OCI-LY7 (cell line): ENCODE measurements at regions of chr3 and their contacts with region 1.

Region 1: DNA sequence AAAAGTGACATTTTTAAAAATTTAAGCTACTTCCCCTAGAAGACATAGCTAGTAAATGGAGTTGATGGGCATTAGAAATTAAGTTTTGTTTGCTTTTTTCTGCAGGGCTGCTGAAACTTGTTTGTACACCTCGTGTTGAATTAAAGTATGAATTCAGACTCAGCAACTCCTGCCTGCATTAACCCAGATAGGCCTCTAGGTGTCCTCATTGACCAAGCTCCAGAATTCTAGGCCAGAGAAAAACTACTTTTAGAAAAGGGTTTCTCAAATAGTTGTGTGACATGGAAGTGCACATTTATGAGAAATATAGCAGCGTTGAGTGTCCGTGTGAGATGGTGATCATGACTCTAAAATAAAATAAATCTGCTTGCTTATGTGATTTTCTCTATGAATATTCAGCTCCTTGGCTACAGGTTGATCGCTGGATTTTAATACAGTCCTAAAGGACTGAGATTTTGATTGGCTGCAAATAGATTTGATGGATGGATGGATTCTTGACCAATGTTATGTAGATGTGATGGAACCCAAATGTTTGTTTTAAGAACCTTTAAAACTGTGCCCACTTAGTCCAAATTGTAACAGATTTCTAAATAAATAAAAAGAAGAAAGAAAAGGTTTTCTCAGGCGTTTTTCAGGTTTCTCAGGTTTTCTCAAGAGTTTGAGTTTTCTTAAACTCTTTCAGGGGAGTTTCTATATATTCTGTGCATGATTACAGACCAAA is 39.4 kb upstream of the LMOD3 start:
- DNase-seq: peak; percentile 54
- H3K4me3 ChIP-seq: no peak overlapping the region
- H3K27ac ChIP-seq: no peak overlapping the region
- H3K4me1 ChIP-seq: no peaks in the 10 kb centered on the region
- CTCF ChIP-seq: peak; percentile 98

Region 2: GRCh38 chr3:69306239-69307185 is 144.8 kb after region 1 on chr3:
- CTCF ChIA-PET with region 1: interaction called, 5 read pairs
- POLR2A ChIA-PET with region 1: interaction called, 3 read pairs
- intact Hi-C with region 1: loop called (anchors 1 kb)
- DNase-seq: peak; percentile 66
- H3K4me3 ChIP-seq: no peak overlapping the region
- H3K27ac ChIP-seq: no peak overlapping the region
- H3K4me1 ChIP-seq: no peaks in the 10 kb centered on the region
- CTCF ChIP-seq: peak; percentile 90

Region 3: GRCh38 chr3:69410250-69410649 is 248.5 kb after region 1 on chr3:
- CTCF ChIA-PET with region 1: no interaction called
- POLR2A ChIA-PET with region 1: no interaction called
- intact Hi-C with region 1: loop called (anchors 5 kb)
- DNase-seq: peak; percentile 63
- H3K4me3 ChIP-seq: no peak overlapping the region
- H3K27ac ChIP-seq: no peak overlapping the region
- H3K4me1 ChIP-seq: no peaks in the 10 kb centered on the region
- CTCF ChIP-seq: peak; percentile 81

Region 4: GRCh38 chr3:69425261-69425660 is 263.5 kb after region 1 on chr3:
- CTCF ChIA-PET with region 1: no interaction called
- POLR2A ChIA-PET with region 1: no interaction called
- intact Hi-C with region 1: loop called (anchors 5 kb)
- DNase-seq: peak; percentile 45
- H3K4me3 ChIP-seq: no peak overlapping the region
- H3K27ac ChIP-seq: no peak overlapping the region
- H3K4me1 ChIP-seq: no peaks in the 10 kb centered on the region
- CTCF ChIP-seq: peak; percentile 69

Region 5: DNA sequence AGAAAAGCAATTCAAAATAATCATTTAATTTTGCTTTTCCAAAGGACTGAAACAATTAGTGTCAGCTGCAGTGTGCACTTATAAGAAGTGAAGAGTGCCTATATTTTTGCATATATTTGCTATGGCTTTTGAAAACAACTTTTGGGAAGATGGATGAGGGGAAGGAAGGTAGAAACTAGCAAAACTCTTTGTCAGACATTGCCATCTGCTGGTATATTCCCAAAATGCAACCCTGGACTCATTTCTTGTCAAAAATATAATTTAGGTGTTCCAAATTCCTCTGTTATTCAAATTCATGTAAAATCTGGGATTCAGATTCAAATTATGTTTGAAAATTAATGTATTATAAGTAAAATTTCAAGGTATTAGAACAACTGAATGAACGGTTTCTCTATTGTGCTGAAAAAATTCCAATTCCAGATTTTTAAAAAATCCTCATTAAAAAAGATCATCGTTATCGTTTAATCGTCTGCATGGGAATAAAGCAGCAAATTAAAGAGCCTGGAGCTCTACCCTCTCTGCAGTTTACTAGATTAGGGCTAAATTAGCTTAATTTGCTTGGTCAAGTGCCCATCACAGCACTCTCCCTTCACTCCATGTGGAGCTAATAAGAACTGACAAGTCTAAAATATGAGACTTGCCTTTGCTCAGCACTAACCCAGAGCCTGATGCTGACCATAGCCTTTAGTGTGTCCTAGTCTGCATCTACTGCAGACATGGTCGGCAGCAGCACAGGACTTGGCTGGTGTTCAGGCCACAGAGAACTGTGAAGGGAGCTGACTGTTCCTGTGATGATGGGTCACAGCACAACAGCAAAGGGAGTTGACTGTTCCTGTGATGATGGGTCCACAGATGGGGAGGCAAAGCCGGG is 509.6 kb after region 1 on chr3:
- CTCF ChIA-PET with region 1: no interaction called
- POLR2A ChIA-PET with region 1: interaction called, 3 read pairs
- intact Hi-C with region 1: loop called (anchors 1 kb)
- DNase-seq: peak; percentile 27
- H3K4me3 ChIP-seq: no peak overlapping the region
- H3K27ac ChIP-seq: no peak overlapping the region
- H3K4me1 ChIP-seq: no peaks in the 10 kb centered on the region
- CTCF ChIP-seq: peak; percentile 84